ENCODE measurements at regions of chr6 and their contacts with region 1.

Region 1: DNA sequence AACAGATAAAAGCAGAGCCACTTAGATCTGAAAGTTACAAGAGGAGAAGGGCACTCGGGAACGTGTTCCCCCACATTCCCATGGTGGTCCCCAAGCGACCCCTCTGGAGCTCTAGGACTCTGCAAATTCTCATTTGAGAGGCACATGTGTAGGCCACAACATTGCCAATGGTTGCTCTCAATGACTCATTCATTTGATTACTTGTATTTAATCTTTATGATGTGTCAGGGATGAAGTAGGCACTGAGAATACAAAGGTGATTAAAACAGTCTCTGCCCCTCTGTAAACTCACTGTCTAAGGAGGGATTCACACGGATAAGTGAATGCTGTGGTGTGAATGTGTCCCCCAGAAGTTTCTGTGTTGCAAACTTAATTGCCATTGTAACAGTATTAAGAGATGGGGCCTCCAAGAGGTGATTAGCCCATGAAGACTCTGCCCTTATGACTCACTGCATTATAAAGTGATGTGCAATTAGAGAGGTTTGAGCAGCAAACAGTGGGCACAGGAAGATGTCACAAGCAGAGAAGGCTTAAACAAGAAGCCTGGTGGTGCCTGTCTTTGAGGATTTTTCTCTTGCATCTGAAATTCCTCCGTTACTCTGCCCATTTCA is 34.0 kb upstream of the TRAM2 start:
- DNase-seq: no peak

Region 2: DNA sequence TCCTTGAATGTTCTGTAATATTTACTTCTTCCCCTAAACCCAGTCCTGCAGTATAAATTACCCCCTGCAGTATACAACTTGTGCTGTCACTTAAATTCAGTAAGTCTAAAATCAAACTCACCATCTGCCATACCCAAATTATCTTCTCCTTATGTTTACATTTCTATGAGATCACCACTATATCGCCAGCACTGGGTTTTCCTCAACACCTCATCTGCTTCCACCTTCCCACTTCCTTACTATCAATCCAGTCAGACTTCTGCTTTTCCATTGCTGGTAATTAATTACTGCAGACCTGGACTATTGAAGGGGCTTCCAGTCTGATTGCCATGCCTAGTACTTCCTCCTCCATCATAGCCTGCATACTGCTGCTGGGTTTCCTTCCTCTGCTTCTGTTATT is 175.5 kb before region 1 on chr6:
- intact Hi-C with region 1: no loop called
- DNase-seq: no peak

Region 3: DNA sequence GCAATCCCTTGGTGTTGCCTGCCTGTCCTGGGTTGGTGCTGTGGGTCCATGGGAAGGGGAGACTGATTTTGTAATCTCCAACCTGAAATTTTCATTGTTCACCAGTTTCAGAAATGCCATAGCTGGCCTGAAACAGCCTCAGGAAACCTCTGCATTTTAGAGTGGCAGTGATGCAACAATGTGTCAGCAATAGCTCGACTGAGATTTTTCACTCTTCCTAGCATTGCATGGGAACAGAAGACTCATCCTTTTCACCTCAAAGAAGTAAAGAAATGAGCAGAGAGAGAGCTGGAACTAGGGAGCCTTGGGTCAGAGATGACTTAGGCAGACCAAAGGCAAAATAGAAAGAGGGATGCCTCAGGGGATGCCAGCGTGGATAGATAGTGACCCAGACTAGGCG is 36.3 kb after region 1 on chr6:
- intact Hi-C with region 1: loop called in 1 of 2 experiments (anchors 5 kb)
- DNase-seq: no peak

Measured in posterior vena cava (tissue), 2 donors.